ENCODE measurements at regions of chr6 and their contacts with region 1.

Region 1: DNA sequence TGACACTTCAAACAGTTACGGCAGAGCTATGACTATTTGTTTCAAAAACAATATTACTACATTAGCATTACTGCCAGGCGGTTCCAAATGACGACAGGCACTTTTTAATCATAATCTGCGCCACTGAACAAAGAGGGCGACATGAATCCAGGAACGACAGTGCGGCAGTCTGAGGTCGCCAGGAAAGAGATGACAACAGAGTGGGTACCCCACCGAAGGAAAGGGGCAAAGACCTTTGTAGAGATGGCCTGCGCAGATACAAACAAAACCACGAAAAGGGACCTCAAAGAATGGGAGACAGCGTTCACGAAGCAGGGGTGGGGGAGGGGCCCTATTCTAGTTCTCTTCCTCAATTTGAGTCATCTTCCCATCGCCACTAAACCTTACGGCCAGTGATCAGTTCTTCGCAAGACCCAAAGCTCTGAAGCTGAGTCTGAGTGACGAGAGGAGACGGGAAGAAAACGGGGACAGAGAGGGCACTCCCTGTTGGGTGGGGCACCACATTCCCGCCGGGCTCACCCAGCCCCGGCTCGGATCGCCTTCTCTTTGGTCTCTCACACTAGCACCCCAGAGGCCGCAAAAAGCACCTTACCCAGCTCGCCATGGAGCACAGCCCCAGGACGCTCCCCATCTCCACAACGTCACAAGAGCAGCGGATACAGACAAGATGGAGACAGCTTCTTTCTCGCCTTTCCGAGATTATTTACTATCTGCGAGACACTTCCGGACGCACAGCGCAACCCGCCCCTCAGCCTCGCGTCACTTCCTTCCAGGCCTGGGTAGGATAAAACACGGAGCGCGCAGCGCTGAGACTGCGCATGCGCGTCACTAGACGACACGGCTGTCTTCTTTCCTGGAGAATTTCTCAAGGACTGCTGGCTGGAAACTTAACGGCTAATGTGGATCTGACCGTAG is at the start of gene SERINC1:
- DNase-seq: peak; percentile 88 to 98 (median 91)
- ATAC-seq: peak; percentile 95
- H3K4me3 ChIP-seq: peak within 1 kb of the TSS; percentile 95
- H3K4me3 Mint-ChIP-seq: peak within 1 kb of the TSS; percentile 99
- H3K27ac ChIP-seq: peak within 1 kb of the TSS; percentile 99 to 100
- H3K27ac Mint-ChIP-seq: peak within 1 kb of the TSS; percentile 100
- H3K4me1 ChIP-seq: peaks cover 27% of the 10 kb centered on the region
- H3K4me1 Mint-ChIP-seq: peaks cover 56% of the 10 kb centered on the region
- H3K27me3 ChIP-seq: no peaks in the 10 kb centered on the region
- H3K27me3 Mint-ChIP-seq: no peaks in the 10 kb centered on the region
- CTCF ChIP-seq: no peak
- total RNA-seq, gene SERINC1: 175 to 178 TPM

Region 2: DNA sequence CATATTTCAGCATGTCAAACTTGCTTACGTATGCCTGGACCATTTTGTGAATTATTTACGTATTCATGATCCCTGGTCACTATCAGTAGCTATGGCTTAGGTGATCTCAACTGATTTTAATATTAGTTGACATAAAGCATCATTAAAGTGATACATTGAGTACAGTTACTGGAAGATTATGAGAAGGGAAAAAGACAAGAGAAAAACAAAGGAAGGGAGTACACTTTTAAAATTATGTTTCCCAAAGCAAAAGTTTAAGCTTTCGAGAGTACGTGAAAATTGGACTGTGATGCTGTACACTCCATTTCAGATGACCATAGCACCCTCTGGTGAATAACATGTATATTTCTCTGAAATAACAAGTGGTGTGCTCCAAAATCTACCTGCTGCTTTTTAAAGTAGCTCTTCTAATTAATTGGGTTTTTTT is 286.9 kb before region 1 on chr6:
- CTCF ChIA-PET with region 1: no interaction called
- POLR2A ChIA-PET with region 1: no interaction called
- intact Hi-C with region 1: no loop called
- DNase-seq: no peak
- ATAC-seq: no peak
- H3K4me3 ChIP-seq: no peak overlapping the region
- H3K4me3 Mint-ChIP-seq: no peak overlapping the region
- H3K27ac ChIP-seq: no peak overlapping the region
- H3K27ac Mint-ChIP-seq: no peak overlapping the region
- H3K4me1 ChIP-seq: no peaks in the 10 kb centered on the region
- H3K4me1 Mint-ChIP-seq: no peaks in the 10 kb centered on the region
- H3K27me3 ChIP-seq: no peaks in the 10 kb centered on the region
- H3K27me3 Mint-ChIP-seq: peaks cover 6% of the 10 kb centered on the region
- CTCF ChIP-seq: no peak

Region 3: DNA sequence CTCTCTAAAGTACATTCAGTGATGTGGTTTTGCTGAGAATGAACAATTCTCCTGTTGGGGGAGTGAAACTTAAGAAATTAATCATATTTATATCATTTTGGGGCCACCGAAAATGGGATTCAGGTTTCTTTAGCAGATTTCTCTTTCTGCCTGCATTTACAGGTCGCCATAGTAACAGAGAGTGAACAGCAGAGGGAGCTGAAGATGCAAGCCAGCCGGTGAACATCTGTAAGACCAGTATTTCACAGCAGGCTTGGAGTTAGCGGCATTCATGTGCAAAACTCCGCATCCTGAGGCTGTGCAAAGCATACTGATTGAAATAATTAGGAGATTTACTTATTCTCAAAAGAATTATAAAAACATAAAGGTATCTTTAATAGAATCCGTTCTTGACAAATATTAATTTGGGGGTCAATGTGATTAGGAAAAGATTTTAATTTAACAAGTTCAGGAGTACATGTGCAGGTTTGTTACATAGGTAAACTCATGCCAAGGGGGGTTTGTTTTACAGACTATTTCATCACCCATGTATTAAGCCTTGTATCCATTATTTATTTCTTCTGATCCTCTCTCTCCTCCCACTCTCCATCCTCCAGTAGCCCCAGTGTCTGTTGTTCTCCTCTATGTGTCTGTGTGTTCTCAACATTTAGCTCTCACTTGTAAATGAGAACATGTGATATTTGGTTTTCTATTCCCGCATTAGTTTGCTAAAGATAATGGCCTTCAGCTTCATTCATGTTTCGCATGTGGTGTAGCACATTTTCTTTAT is 89.7 kb before region 1 on chr6:
- CTCF ChIA-PET with region 1: no interaction called
- POLR2A ChIA-PET with region 1: no interaction called
- intact Hi-C with region 1: loop called in 1 of 2 experiments (anchors 5 kb)
- DNase-seq: peak; percentile 38 to 85 (median 48)
- ATAC-seq: peak; percentile 100
- H3K4me3 ChIP-seq: no peak overlapping the region
- H3K4me3 Mint-ChIP-seq: no peak overlapping the region
- H3K27ac ChIP-seq: no peak overlapping the region
- H3K27ac Mint-ChIP-seq: no peak overlapping the region
- H3K4me1 ChIP-seq: no peaks in the 10 kb centered on the region
- H3K4me1 Mint-ChIP-seq: peaks cover 8% of the 10 kb centered on the region
- H3K27me3 ChIP-seq: no peaks in the 10 kb centered on the region
- H3K27me3 Mint-ChIP-seq: peaks cover 13% of the 10 kb centered on the region
- CTCF ChIP-seq: peak; percentile 88

Region 4: DNA sequence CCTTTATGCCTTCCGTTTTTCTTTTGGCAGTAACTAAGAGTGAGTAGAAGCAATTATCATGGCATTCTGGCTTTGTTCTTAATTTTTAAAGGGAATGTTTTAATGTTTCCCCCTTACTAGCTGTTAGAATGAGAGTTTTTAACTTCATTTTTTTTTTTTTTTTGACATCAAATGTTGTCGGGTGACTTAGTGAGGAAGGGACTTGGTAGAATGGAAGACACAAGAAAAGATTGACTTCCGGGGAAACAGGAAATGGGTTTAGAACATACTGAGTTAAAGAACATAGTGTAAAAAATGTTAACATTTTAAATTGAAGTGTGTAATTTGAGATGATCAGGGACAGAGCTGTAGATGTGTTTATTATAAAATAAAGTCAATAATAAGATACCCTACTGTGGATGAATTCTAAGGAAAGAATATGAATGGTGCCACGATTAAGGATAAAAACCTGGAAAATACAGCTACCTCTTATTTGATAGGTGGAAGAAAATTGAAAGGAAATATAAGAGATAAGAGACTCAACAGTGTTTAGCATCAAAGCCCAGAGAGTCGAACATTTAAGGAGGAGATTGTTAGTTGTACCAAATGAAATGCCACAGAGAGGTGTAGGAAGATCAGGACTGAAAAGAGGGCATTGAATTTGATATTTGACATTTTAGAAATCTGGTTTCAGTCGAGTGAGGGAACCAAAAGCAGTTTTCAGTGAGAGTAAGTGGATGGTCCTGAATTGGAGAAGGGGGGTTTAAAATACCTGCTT is 62.5 kb before region 1 on chr6:
- CTCF ChIA-PET with region 1: interaction called, 3 read pairs
- POLR2A ChIA-PET with region 1: interaction called, 26 read pairs
- intact Hi-C with region 1: no loop called
- DNase-seq: peak in 3 of 14 experiments; percentile 62 to 69 (median 63)
- ATAC-seq: peak; percentile 91
- H3K4me3 ChIP-seq: peak overlapping the region; percentile 26
- H3K4me3 Mint-ChIP-seq: peak overlapping the region; percentile 73
- H3K27ac ChIP-seq: peak overlapping the region; percentile 42 to 72
- H3K27ac Mint-ChIP-seq: peak overlapping the region; percentile 82
- H3K4me1 ChIP-seq: peaks cover 3% of the 10 kb centered on the region
- H3K4me1 Mint-ChIP-seq: peaks cover 84% of the 10 kb centered on the region
- H3K27me3 ChIP-seq: no peaks in the 10 kb centered on the region
- H3K27me3 Mint-ChIP-seq: no peaks in the 10 kb centered on the region
- CTCF ChIP-seq: no peak

Region 5: DNA sequence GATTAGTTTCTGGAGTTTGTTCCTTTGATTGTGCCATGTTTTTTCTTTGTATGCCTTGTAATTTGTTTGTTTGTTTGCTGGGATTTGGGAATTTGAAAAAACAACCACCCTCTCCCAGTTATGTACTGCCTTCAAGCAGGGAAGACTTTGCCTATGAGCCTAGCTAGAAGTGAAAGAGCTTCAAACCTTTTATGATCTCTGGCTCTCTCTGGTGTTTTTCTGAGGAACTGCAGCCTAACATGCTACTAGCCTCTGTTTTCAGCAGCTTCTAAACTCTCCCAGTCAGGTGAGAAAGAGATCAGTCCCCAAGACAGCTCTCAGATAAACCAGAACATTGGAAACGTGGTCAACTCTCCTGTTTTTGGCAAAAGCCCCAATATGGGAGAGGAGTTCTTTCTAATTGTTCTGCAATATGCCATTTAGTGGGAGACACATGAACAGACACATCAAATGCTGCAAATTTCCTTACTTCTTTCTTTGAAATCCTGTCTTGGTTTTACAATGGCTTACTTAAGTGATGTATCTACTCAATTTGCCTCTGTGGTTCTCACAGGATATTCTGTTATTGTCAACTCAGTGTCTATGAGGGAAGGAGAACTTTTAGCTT is 59.2 kb after region 1 on chr6:
- CTCF ChIA-PET with region 1: interaction called, 6 read pairs
- POLR2A ChIA-PET with region 1: interaction called, 6 read pairs
- intact Hi-C with region 1: loop called (anchors 1 kb)
- DNase-seq: peak in 13 of 14 experiments; percentile 1 to 77 (median 40)
- ATAC-seq: peak; percentile 94
- H3K4me3 ChIP-seq: no peak overlapping the region
- H3K4me3 Mint-ChIP-seq: no peak overlapping the region
- H3K27ac ChIP-seq: no peak overlapping the region
- H3K27ac Mint-ChIP-seq: no peak overlapping the region
- H3K4me1 ChIP-seq: no peaks in the 10 kb centered on the region
- H3K4me1 Mint-ChIP-seq: no peaks in the 10 kb centered on the region
- H3K27me3 ChIP-seq: peaks cover 2 to 7% of the 10 kb centered on the region in 2 experiments
- H3K27me3 Mint-ChIP-seq: peaks cover 26% of the 10 kb centered on the region
- CTCF ChIP-seq: peak; percentile 97

Region 6: GRCh38 chr6:123316733-123317323 is 845.5 kb after region 1 on chr6:
- CTCF ChIA-PET with region 1: no interaction called
- POLR2A ChIA-PET with region 1: no interaction called
- intact Hi-C with region 1: loop called (anchors 5 kb)
- DNase-seq: peak in 2 of 14 experiments; percentile 1 to 16
- ATAC-seq: no peak
- H3K4me3 ChIP-seq: no peak overlapping the region
- H3K4me3 Mint-ChIP-seq: no peak overlapping the region
- H3K27ac ChIP-seq: no peak overlapping the region
- H3K27ac Mint-ChIP-seq: no peak overlapping the region
- H3K4me1 ChIP-seq: no peaks in the 10 kb centered on the region
- H3K4me1 Mint-ChIP-seq: no peaks in the 10 kb centered on the region
- H3K27me3 ChIP-seq: no peaks in the 10 kb centered on the region
- H3K27me3 Mint-ChIP-seq: no peaks in the 10 kb centered on the region
- CTCF ChIP-seq: peak; percentile 67